ENCODE measurements at regions of chr6 and their contacts with region 1.

Region 1: DNA sequence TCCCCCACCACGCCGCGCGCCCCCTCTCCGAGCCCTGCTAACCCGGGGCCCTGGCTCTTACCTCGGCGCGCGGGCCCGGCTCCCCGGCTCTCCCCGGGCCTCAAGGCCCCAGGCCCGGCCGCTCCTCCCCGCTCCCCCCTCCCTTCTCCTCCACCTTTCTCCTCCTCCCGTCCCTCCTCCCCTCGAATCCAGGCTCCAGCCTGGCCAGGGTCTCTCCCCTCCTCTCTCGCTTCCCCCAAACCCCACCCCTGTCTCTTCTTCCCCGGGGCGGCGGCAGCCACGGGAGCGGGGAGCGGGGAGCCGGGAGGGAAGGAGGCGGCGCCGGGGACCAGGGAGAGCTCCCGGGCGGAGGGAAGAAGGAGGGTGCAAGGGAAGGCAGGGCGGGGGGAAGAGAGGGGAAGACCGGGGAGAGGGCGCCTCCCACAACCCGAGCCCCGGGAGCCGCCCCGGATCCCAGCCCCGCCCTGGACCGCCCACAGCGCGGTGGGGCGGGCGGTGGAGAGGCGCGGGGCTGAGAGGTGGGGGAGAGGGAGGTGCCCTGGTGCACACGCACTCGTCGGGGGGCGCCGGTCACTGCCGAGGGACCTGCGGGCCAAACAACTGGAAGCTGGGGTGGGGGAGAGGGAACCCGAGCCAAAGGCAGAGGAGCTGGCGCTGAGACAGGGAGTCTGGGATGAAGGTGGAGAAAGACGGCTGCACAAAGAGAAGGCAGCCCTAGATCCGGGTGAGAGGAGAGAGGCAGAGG is at the start of gene GABBR1:
- DNase-seq: peak; percentile 99
- H3K4me3 ChIP-seq: peak within 1 kb of the TSS; percentile 62 to 90
- H3K27ac ChIP-seq: peak within 1 kb of the TSS; percentile 33 to 71; a peak in 3 of 4 replicates
- H3K4me1 ChIP-seq: peaks cover 16 to 17% of the 10 kb centered on the region in 2 experiments; a peak in 2 of 4 replicates
- H3K27me3 ChIP-seq: no peaks in the 10 kb centered on the region
- CTCF ChIP-seq: no peak
- EP300 ChIP-seq: no peak
- RAD21 ChIP-seq: no peak
- polyA plus RNA-seq, gene GABBR1: 26.8 and 33.8 TPM in 2 replicates

Region 2: DNA sequence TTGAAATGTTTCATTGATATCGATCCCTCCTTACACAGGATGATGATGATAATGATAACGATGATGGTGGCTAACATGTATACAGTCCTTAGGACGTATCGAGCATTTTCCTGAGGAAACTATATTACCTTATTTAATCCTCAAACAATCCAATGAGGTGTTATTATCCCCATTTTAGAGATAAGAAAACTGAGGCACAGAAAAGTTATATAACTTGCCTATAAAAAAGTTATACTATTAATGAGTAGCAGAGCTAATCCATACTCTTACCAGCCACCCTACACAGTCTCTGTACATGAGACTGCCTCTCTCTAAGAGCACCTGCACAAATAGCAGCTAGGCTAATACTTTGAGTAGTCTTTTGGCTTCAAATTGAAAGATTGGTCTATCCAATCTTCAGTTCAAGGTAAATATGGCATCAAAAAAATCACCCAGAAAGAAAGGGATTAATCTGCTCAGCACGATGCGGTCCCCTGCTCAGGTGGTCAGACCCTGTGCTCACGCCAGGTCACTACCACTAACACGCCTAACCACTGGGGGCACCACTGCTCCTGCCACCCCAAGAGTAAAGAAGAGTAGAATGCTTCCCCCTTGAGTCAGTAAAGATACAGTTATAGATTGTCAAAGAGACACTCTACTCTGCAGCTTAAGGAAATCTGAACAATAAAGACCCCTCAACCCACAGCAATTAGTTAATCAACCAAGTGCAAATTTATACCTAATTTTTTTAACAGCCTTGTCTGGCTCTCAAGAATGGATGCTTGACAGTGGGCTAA is 15.0 kb before region 1 on chr6:
- CTCF ChIA-PET with region 1: interaction called, 12 read pairs
- POLR2A ChIA-PET with region 1: interaction called, 3 read pairs
- DNase-seq: peak; percentile 34
- H3K4me3 ChIP-seq: no peak overlapping the region
- H3K27ac ChIP-seq: no peak overlapping the region
- H3K4me1 ChIP-seq: no peaks in the 10 kb centered on the region
- H3K27me3 ChIP-seq: no peaks in the 10 kb centered on the region
- CTCF ChIP-seq: no peak
- EP300 ChIP-seq: no peak
- RAD21 ChIP-seq: no peak

Region 3: GRCh38 chr6:29665942-29666825 is 33.2 kb after region 1 on chr6:
- CTCF ChIA-PET with region 1: no interaction called
- POLR2A ChIA-PET with region 1: no interaction called
- DNase-seq: no peak
- H3K4me3 ChIP-seq: no peak overlapping the region
- H3K27ac ChIP-seq: no peak overlapping the region
- H3K4me1 ChIP-seq: no peaks in the 10 kb centered on the region
- H3K27me3 ChIP-seq: peaks cover 11% of the 10 kb centered on the region; the same call in 1 of the 2 replicates
- CTCF ChIP-seq: no peak
- EP300 ChIP-seq: no peak
- RAD21 ChIP-seq: no peak

Measured in SK-N-SH (cell line).